ENCODE measurements at regions of chr7 and their contacts with region 1.

Region 1: DNA sequence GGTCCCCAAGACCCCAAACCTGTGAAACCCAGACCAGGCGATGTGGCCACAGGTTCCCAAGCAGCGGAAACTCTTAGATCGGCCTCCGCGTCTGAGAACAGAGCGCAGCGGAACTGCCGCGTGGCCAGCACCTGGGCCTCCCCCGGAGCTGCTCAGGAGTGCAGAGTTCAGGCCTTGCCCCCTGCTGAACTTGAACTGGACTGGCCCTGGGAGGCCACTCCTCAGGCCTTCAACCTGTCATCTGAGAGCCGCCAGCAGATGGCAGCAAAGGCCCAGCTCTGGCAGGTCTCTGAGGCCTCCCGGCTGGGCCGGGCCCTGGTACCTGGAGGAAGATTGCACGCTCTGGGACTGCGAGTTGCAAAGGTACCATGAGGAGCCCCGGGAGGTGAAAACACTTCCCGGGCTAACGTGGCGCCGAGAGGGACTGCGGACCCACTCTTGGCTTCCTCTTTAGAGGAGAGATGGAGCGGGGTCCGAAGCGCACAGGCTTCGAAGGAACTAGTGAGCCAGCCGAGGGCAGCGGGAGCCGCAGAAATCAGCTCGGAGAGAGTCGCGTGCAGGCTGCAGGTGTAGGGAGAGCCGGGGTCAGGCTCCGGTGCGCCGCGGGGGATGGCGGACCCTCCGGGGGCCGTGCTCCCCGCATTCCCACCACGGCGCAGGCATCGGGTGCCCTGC is 89.1 kb downstream of the PAXIP1 start:
- DNase-seq: peak; percentile 86
- ATAC-seq: peak; percentile 94
- H3K4me3 Mint-ChIP-seq: peak overlapping the region; percentile 84
- H3K27ac Mint-ChIP-seq: no peak overlapping the region
- H3K4me1 Mint-ChIP-seq: peaks cover 3% of the 10 kb centered on the region
- H3K27me3 Mint-ChIP-seq: peaks cover 25% of the 10 kb centered on the region
- CTCF ChIP-seq: peak; percentile 26

Region 2: GRCh38 chr7:154937837-154938236 is 24.1 kb after region 1 on chr7:
- CTCF ChIA-PET with region 1: no interaction called
- POLR2A ChIA-PET with region 1: no interaction called
- intact Hi-C with region 1: no loop called
- DNase-seq: no peak
- ATAC-seq: no peak
- H3K4me3 Mint-ChIP-seq: no peak overlapping the region
- H3K27ac Mint-ChIP-seq: no peak overlapping the region
- H3K4me1 Mint-ChIP-seq: peaks cover 16% of the 10 kb centered on the region
- H3K27me3 Mint-ChIP-seq: no peaks in the 10 kb centered on the region
- CTCF ChIP-seq: no peak

Region 3: GRCh38 chr7:154953006-154953684 is 39.4 kb after region 1 on chr7:
- CTCF ChIA-PET with region 1: interaction called, 6 read pairs
- POLR2A ChIA-PET with region 1: no interaction called
- intact Hi-C with region 1: loop called (anchors 5 kb)
- DNase-seq: peak; percentile 41
- ATAC-seq: no peak
- H3K4me3 Mint-ChIP-seq: no peak overlapping the region
- H3K27ac Mint-ChIP-seq: no peak overlapping the region
- H3K4me1 Mint-ChIP-seq: no peaks in the 10 kb centered on the region
- H3K27me3 Mint-ChIP-seq: no peaks in the 10 kb centered on the region
- CTCF ChIP-seq: no peak

Region 4: GRCh38 chr7:155009570-155010157 is 95.9 kb after region 1 on chr7:
- CTCF ChIA-PET with region 1: interaction called, 8 read pairs
- POLR2A ChIA-PET with region 1: no interaction called
- intact Hi-C with region 1: loop called (anchors 5 kb)
- DNase-seq: no peak
- ATAC-seq: no peak
- H3K4me3 Mint-ChIP-seq: no peak overlapping the region
- H3K27ac Mint-ChIP-seq: no peak overlapping the region
- H3K4me1 Mint-ChIP-seq: peaks cover 5% of the 10 kb centered on the region
- H3K27me3 Mint-ChIP-seq: no peaks in the 10 kb centered on the region
- CTCF ChIP-seq: no peak

Region 5: GRCh38 chr7:155027879-155028278 is 114.1 kb after region 1 on chr7:
- CTCF ChIA-PET with region 1: no interaction called
- POLR2A ChIA-PET with region 1: no interaction called
- intact Hi-C with region 1: no loop called
- DNase-seq: no peak
- ATAC-seq: no peak
- H3K4me3 Mint-ChIP-seq: no peak overlapping the region
- H3K27ac Mint-ChIP-seq: no peak overlapping the region
- H3K4me1 Mint-ChIP-seq: no peaks in the 10 kb centered on the region
- H3K27me3 Mint-ChIP-seq: peaks cover 13% of the 10 kb centered on the region
- CTCF ChIP-seq: no peak

Region 6: GRCh38 chr7:155090684-155091083 is 176.9 kb after region 1 on chr7:
- CTCF ChIA-PET with region 1: no interaction called
- POLR2A ChIA-PET with region 1: no interaction called
- intact Hi-C with region 1: no loop called
- DNase-seq: no peak
- ATAC-seq: no peak
- H3K4me3 Mint-ChIP-seq: no peak overlapping the region
- H3K27ac Mint-ChIP-seq: no peak overlapping the region
- H3K4me1 Mint-ChIP-seq: no peaks in the 10 kb centered on the region
- H3K27me3 Mint-ChIP-seq: peaks cover 10% of the 10 kb centered on the region
- CTCF ChIP-seq: no peak

Region 7: DNA sequence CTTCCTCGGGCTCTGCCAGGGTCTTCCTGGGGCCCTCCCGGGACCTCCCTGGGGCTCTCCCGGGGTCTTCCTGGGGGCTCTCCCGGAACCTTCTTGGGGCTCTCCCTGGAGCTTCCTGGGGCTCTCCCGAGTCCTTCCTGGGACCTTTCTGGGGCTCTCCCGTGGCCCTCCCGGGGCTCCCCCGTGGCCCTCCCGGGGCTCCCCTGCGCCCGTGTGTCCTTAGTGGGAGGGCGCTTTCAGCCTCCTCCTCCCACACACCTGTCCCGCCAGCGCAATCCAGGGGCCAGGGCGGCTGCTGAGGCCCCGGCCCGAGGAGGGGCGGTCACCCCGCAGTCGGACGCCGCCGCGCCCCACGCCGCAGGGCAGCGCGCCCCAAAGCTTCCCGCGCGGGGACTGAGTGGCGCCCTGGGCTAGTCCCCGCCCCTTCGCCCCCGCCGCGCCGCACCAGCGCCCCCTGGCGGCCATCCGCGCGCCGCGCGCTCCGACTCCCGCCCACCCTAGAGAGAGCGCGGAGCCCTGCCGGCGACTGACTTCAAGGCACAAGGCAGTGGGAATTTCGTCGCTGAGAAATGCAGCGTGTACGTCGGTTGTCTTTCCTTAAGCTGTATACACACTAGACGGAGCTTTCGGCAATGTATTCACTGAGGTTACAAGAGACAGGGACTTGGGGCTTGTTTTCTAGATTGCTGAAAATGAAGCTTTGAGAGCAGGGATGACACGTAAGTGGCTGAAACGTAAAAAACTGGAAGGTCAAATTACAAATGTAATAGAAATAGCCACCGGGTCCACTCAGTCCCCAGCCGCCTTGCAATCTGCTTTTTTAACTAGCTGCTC is 431.0 kb after region 1 on chr7:
- CTCF ChIA-PET with region 1: interaction called, 15 read pairs
- POLR2A ChIA-PET with region 1: no interaction called
- intact Hi-C with region 1: loop called (anchors 1 kb)
- DNase-seq: peak; percentile 87
- ATAC-seq: peak; percentile 77
- H3K4me3 Mint-ChIP-seq: peak overlapping the region; percentile 79
- H3K27ac Mint-ChIP-seq: no peak overlapping the region
- H3K4me1 Mint-ChIP-seq: peaks cover 13% of the 10 kb centered on the region
- H3K27me3 Mint-ChIP-seq: no peaks in the 10 kb centered on the region
- CTCF ChIP-seq: peak; percentile 77

Region 8: GRCh38 chr7:155533827-155534690 is 620.3 kb after region 1 on chr7:
- CTCF ChIA-PET with region 1: interaction called, 3 read pairs
- POLR2A ChIA-PET with region 1: no interaction called
- intact Hi-C with region 1: loop called (anchors 1 kb)
- DNase-seq: no peak
- ATAC-seq: peak; percentile 65
- H3K4me3 Mint-ChIP-seq: peak overlapping the region; percentile 69
- H3K27ac Mint-ChIP-seq: no peak overlapping the region
- H3K4me1 Mint-ChIP-seq: peaks cover 15% of the 10 kb centered on the region
- H3K27me3 Mint-ChIP-seq: peaks cover 66% of the 10 kb centered on the region
- CTCF ChIP-seq: no peak

Region 9: GRCh38 chr7:155763691-155764437 is 850.1 kb after region 1 on chr7:
- CTCF ChIA-PET with region 1: no interaction called
- POLR2A ChIA-PET with region 1: no interaction called
- intact Hi-C with region 1: loop called (anchors 1 kb)
- DNase-seq: no peak
- ATAC-seq: peak; percentile 54
- H3K4me3 Mint-ChIP-seq: peak overlapping the region; percentile 61
- H3K27ac Mint-ChIP-seq: peak overlapping the region; percentile 85
- H3K4me1 Mint-ChIP-seq: peaks cover 38% of the 10 kb centered on the region
- H3K27me3 Mint-ChIP-seq: no peaks in the 10 kb centered on the region
- CTCF ChIP-seq: no peak

Measured in activated B cell treated with CpG ODN at 0.5 μM for 24 hours (primary cell).